Caco-2 (cell line): ENCODE measurements at regions of chr18 and their contacts with region 1.

Region 1: DNA sequence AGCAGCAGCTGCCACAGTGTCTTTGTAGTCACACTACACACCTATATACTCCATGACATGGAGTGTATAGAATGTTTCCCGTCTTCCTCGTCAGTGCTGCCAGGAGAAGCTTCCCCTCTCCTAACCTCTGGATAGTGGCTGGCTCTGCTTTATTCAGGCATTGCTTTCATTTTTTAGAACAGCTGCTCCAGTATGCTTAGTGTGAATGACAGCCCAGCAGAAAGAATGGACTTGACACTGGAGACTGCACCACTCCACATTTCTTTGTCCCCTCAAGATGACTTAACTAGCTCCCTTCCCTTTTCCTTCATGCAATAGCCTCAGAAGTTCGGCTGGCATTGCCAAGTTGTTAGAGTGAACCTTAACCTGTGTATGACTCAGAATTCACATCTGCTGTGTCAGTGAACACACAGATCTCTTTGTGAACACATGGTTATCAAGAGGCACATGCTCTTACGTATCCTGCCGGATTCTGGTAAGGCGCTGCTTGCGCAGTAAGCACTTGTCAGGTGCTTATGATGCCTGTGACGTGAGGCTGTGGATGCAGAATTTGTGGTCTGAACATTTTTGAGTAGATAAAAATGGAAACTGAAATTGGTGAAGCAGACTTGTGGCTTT is 73.9 kb downstream of the NEDD4L start:
- DNase-seq: peak in 1 of 2 experiments; percentile 7
- H3K4me3 ChIP-seq: no peak overlapping the region
- H3K4me3 Mint-ChIP-seq: no peak overlapping the region
- H3K27ac Mint-ChIP-seq: peak overlapping the region; percentile 73
- H3K4me1 ChIP-seq: peaks cover 11% of the 10 kb centered on the region; the same call in 1 of the 2 replicates
- H3K4me1 Mint-ChIP-seq: peaks cover 18% of the 10 kb centered on the region
- H3K27me3 ChIP-seq: no peaks in the 10 kb centered on the region
- H3K27me3 Mint-ChIP-seq: no peaks in the 10 kb centered on the region
- CTCF ChIP-seq: no peak

Region 2: DNA sequence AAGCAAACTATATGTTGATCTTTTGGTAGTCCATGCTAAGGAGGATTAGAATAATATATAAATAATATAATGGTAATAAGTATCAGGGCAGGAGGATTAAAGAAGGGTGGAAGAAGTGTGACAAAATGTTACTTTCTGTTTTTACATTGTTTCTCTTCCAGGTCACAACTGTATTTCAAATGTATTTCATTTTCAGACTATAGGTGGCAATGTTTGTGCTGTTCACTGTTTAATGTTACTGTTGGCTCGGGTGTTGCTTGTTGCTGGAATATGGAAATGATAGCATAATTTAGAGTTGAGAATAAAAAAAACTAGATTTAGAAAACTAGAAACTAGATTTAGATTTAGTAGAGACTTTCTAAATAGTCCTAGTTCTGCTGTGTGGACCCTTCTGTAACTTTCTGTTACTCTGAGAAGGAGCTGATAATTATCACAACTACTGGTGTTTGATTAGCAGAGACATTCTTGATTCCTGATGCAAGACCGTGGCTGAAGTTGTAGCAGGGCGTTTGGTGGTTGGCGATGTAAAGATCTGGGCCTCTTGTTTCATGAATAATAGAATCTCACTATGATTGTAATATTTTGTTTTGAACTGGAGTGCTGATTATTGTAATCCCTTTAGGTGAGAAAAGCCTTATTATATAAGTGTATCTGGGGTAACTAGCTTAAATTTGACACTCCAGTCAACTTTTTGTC is 66.0 kb before region 1 on chr18:
- CTCF ChIA-PET with region 1: interaction called, 4 read pairs
- POLR2A ChIA-PET with region 1: no interaction called
- intact Hi-C with region 1: loop called (anchors 2 kb)
- DNase-seq: no peak
- H3K4me3 ChIP-seq: no peak overlapping the region
- H3K4me3 Mint-ChIP-seq: no peak overlapping the region
- H3K27ac Mint-ChIP-seq: no peak overlapping the region
- H3K4me1 ChIP-seq: peaks cover 15% of the 10 kb centered on the region
- H3K4me1 Mint-ChIP-seq: peaks cover 26% of the 10 kb centered on the region
- H3K27me3 ChIP-seq: no peaks in the 10 kb centered on the region
- H3K27me3 Mint-ChIP-seq: no peaks in the 10 kb centered on the region
- CTCF ChIP-seq: peak in 1 of 2 experiments; percentile 2

Region 3: GRCh38 chr18:58087917-58088692 is 29.8 kb before region 1 on chr18:
- CTCF ChIA-PET with region 1: no interaction called
- POLR2A ChIA-PET with region 1: no interaction called
- intact Hi-C with region 1: loop called (anchors 2 kb)
- DNase-seq: no peak
- H3K4me3 ChIP-seq: no peak overlapping the region
- H3K4me3 Mint-ChIP-seq: no peak overlapping the region
- H3K27ac Mint-ChIP-seq: peak overlapping the region; percentile 70
- H3K4me1 ChIP-seq: peaks cover 22% of the 10 kb centered on the region
- H3K4me1 Mint-ChIP-seq: peaks cover 7% of the 10 kb centered on the region
- H3K27me3 ChIP-seq: no peaks in the 10 kb centered on the region
- H3K27me3 Mint-ChIP-seq: no peaks in the 10 kb centered on the region
- CTCF ChIP-seq: no peak